CD14-positive monocyte (primary cell): ENCODE measurements at regions of chr1 and their contacts with region 1.

Region 1: DNA sequence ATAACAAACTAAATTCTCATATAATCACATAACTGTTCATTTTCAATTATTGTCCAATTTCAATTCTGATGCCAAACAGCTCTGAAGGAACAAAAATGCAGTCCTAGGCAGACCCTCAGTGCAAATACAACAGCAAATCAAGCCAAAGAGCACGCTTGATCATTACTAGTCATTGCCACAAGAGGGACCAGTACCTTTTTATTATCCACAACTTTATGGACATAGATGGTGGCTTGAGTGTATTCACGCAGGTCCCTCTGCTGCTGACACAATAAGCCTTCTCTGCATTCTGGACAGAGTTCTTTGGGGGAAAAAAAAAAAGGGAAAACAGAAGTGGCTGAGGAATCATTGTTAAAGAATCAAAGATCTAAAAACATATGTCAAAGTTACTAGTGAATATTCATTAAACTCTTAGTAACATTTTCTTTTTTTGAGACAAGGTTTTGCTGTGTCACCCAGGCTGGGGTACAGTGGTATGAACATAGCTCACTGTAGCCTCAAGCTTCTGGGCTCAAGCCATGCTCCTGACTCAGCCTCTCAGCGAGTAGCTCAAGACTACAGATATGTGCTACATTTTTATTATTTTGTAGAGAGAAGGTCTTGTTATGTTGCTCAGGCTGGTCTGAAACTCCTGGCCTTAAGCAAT is 34.3 kb upstream of the RAP1GAP start:
- DNase-seq: peak in 2 of 3 donors; percentile 5 to 12
- H3K4me3 ChIP-seq: no peak overlapping the region
- H3K4me3 Mint-ChIP-seq: no peak overlapping the region
- H3K27ac ChIP-seq: peak overlapping the region in 1 of 2 donors; percentile 32
- H3K27ac Mint-ChIP-seq: peak overlapping the region in 2 of 7 donors; percentile 48 to 55
- H3K4me1 ChIP-seq: peaks cover 5 to 8% of the 10 kb centered on the region in 2 donors
- H3K4me1 Mint-ChIP-seq: peaks cover 15% of the 10 kb centered on the region
- H3K27me3 ChIP-seq: no peaks in the 10 kb centered on the region
- H3K27me3 Mint-ChIP-seq: no peaks in the 10 kb centered on the region
- CTCF ChIP-seq: peak; percentile 54

Region 2: DNA sequence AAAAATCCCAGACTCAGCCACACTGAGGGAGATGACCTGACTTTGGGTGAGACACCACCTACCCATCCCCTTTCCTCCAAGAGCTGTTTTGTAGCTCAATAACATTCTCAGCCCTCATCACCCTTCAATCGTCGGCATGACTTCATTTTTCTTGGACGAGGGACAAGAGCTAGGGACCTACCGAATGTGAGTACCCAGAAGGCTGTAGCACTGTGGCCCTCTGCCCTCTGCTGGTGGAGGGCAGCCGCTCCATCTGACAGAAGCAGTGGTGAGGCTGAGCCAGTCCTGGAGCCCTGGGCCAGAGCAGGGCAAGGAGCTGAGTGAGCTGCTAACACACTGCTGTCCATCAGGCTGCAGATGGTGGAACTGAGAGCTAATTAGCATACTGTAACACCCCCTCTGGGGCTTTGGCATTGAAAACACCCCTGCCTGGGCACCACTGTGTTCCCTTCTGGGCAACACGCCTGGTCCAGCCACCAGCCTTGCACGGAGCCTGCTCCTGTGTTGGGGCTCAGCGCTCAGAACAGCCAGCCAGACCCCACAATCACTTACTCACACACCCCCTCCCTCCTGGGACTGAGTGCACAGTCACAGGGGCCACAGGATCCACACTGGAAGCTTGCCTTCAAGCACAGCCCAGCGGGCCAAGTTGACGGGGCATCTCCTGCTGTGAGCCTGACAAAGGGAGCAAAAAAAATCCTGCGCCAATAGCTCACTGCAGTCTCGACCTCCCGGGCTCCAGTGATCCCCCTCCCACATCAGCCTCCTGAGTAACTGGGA is 212.5 kb before region 1 on chr1:
- intact Hi-C with region 1: no loop called
- DNase-seq: no peak
- H3K4me3 ChIP-seq: no peak overlapping the region
- H3K4me3 Mint-ChIP-seq: no peak overlapping the region
- H3K27ac ChIP-seq: no peak overlapping the region
- H3K27ac Mint-ChIP-seq: peak overlapping the region in 1 of 7 donors; percentile 53
- H3K4me1 ChIP-seq: no peaks in the 10 kb centered on the region
- H3K4me1 Mint-ChIP-seq: no peaks in the 10 kb centered on the region
- H3K27me3 ChIP-seq: peaks cover 3 to 6% of the 10 kb centered on the region in 2 donors
- H3K27me3 Mint-ChIP-seq: peaks cover 22 to 35% (median 33%) of the 10 kb centered on the region in 3 donors
- CTCF ChIP-seq: peak; percentile 36

Region 3: DNA sequence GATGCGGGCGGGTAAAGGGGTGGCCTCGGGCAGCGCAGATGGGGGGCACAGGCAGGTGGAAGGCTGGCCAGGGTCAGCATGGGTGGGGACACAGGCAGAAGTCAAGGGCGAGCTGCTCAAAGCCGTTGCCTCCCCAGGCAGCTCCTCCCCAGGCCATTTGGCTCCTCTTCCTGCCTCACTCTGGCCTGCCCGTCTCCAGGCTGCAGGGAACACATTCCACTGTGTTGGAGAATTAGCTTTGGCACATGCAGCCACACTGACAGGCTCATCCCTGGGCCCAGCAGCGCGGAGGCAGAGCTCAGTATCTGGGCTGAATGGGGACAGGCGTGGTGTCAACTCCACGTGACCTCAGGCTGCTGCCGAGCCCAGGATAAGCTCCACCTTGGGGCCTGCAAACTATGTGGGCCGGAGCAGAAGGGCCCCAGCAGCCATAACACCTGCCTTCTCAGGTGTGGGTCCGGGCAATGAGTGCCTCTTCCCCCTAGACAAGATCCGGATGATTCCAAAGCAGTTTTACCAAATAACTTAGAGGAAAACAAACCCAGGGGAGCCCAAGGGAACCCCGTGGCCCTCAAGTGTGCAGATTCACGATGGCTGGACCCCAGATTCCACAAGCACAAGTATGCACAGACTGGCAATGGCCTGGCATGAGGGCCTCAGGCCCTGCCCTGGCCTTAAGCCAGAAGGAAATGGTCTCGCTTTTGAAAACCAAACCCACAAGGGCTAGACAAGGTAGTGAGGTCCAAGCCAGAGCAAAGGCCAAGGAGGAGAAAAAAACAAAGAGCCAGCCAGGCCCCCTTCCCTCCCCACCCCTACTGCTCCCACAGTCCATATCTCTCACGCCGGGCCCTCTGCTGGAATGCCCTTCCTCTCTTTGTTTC is 193.5 kb after region 1 on chr1:
- intact Hi-C with region 1: no loop called
- DNase-seq: no peak
- H3K4me3 ChIP-seq: no peak overlapping the region
- H3K4me3 Mint-ChIP-seq: no peak overlapping the region
- H3K27ac ChIP-seq: no peak overlapping the region
- H3K27ac Mint-ChIP-seq: peak overlapping the region in 1 of 7 donors; percentile 26
- H3K4me1 ChIP-seq: no peaks in the 10 kb centered on the region
- H3K4me1 Mint-ChIP-seq: no peaks in the 10 kb centered on the region
- H3K27me3 ChIP-seq: no peaks in the 10 kb centered on the region
- H3K27me3 Mint-ChIP-seq: peaks cover 1 to 6% (median 3%) of the 10 kb centered on the region in 3 donors
- CTCF ChIP-seq: no peak

Region 4: GRCh38 chr1:21963477-21964217 is 260.2 kb after region 1 on chr1:
- intact Hi-C with region 1: loop called in 1 of 2 experiments (anchors 10 kb)
- DNase-seq: peak; percentile 46 to 71 (median 64)
- H3K4me3 ChIP-seq: no peak overlapping the region
- H3K4me3 Mint-ChIP-seq: no peak overlapping the region
- H3K27ac ChIP-seq: no peak overlapping the region
- H3K27ac Mint-ChIP-seq: peak overlapping the region in 3 of 7 donors; percentile 9 to 32 (median 31)
- H3K4me1 ChIP-seq: no peaks in the 10 kb centered on the region
- H3K4me1 Mint-ChIP-seq: peaks cover 3% of the 10 kb centered on the region
- H3K27me3 ChIP-seq: no peaks in the 10 kb centered on the region
- H3K27me3 Mint-ChIP-seq: peaks cover 0 to 5% (median 3%) of the 10 kb centered on the region in 3 donors
- CTCF ChIP-seq: peak; percentile 94